Ovary (tissue), 10 donors: ENCODE measurements at regions of chr6 and their contacts with region 1.

Region 1: GRCh38 chr6:159349915-159350314 is 180.7 kb downstream of the FNDC1 start:
- DNase-seq: no peak
- H3K4me3 ChIP-seq: no peak overlapping the region
- H3K27ac ChIP-seq: no peak overlapping the region
- H3K4me1 ChIP-seq: no peaks in the 10 kb centered on the region
- H3K27me3 ChIP-seq: no peaks in the 10 kb centered on the region
- CTCF ChIP-seq: no peak
- EP300 ChIP-seq: no peak
- POLR2A ChIP-seq: no peak

Region 2: GRCh38 chr6:158408552-158409130 is 941.3 kb before region 1 on chr6:
- intact Hi-C with region 1: no loop called
- DNase-seq: peak; percentile 44 to 73 (median 53)
- H3K4me3 ChIP-seq: no peak overlapping the region
- H3K27ac ChIP-seq: peak overlapping the region in 1 of 2 donors; percentile 31
- H3K4me1 ChIP-seq: peaks cover 7% of the 10 kb centered on the region
- H3K27me3 ChIP-seq: no peaks in the 10 kb centered on the region
- CTCF ChIP-seq: no peak
- EP300 ChIP-seq: no peak
- POLR2A ChIP-seq: no peak

Region 3: DNA sequence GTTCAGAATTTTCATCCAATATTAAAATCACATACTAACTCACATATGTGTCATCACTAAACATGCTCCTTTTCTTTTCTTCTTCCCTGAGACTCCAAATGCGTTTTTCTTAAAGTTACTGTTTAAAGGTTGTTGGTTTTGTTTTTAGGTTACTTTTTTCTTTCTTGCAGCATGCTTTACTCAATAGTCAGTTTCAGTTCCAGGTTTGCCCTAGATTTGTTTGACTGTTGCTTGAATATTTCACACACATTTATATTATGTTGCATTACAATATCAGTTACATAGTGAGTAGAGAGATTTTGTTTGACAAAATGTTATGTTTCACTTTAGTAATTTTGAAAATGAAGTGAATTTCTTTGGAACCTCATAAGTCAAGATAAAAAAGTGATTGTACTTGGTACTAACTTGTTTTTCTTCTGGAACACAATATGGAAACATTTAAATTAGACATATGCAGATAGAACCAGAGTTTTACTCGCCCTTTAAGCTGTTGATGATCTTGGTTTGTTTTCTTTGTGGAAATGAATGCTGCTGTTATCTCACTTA is 153.4 kb before region 1 on chr6:
- intact Hi-C with region 1: loop called in 1 of 4 experiments (anchors 5 kb)
- DNase-seq: no peak
- H3K4me3 ChIP-seq: no peak overlapping the region
- H3K27ac ChIP-seq: no peak overlapping the region
- H3K4me1 ChIP-seq: no peaks in the 10 kb centered on the region
- H3K27me3 ChIP-seq: no peaks in the 10 kb centered on the region
- CTCF ChIP-seq: no peak
- EP300 ChIP-seq: no peak
- POLR2A ChIP-seq: no peak